Dorsolateral prefrontal cortex (tissue), 120 donors: ENCODE measurements at regions of chr10 and their contacts with region 1.

Region 1: GRCh38 chr10:79274279-79275104 is 72.8 kb upstream of the PPIF start:
- DNase-seq: peak; percentile 71 to 97 (median 95)
- H3K4me3 ChIP-seq: peak overlapping the region in 31 of 59 donors; percentile 3 to 44 (median 24)
- H3K27ac ChIP-seq: peak overlapping the region; percentile 78 to 98 (median 92)
- H3K27me3 ChIP-seq: no peaks in the 10 kb centered on the region
- CTCF ChIP-seq: peak in 43 of 56 donors; percentile 9 to 61 (median 36)

Region 2: DNA sequence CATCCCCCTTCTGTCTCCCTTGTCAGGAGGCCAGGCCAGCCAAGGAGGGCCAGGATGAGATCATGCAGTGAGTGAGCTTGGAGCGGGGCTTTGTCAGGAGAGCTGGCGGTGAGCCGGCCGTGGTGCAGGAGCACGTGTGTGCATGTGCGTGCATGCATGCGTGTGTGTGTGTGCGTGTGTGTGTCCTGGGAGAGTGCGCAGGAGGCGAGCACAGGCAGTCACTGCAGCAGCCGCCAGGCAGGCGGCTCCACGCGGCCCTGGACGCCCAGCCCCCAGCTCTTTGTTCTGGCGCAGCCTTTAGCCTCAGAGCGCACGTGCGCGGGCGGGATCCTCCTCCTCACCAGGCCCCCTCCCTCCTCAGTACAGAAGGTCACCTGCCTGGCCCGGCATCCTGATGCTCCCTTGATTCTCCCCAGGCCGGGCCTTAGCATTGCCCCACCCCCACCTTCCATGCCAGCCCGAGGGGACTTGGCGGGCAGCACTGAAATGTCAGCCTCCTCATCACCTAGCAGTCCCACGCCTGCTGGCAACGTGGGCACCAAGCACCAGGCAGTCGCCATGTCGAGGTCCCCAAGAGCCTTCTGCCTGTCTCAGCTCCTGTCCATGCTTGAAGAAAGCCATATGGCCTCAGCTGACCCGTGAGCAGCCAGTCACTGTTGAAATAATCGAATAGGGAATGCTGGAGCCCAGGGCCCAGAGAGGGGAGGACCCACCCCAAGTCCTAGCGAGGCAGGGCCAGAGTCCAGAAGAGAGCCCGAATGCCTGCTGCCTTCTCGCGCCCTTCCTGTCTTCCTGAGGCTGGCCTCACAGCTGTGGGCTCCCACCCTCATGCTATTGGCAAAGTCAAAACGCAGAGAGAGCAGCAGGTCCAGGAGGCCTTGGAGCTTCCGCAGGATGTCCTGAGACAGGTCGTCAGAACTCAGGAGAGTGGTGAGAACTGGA is 53.1 kb before region 1 on chr10:
- intact Hi-C with region 1: loop called (anchors 5 to 10 kb)
- DNase-seq: peak; percentile 57 to 84 (median 76)
- H3K4me3 ChIP-seq: peak overlapping the region in 24 of 59 donors; percentile 3 to 44 (median 22)
- H3K27ac ChIP-seq: peak overlapping the region; percentile 1 to 91 (median 83)
- H3K27me3 ChIP-seq: no peaks in the 10 kb centered on the region
- CTCF ChIP-seq: peak in 32 of 56 donors; percentile 7 to 51 (median 32)

Region 3: GRCh38 chr10:79242620-79243152 is 31.8 kb before region 1 on chr10:
- intact Hi-C with region 1: loop called in 1 of 2 experiments (anchors 2 kb)
- DNase-seq: peak in 7 of 10 donors; percentile 42 to 86 (median 71)
- H3K4me3 ChIP-seq: peak overlapping the region; percentile 48 to 80 (median 64)
- H3K27ac ChIP-seq: peak overlapping the region in 57 of 59 donors; percentile 48 to 97 (median 90)
- H3K27me3 ChIP-seq: no peaks in the 10 kb centered on the region
- CTCF ChIP-seq: peak in 1 of 56 donors; percentile 32

Region 4: DNA sequence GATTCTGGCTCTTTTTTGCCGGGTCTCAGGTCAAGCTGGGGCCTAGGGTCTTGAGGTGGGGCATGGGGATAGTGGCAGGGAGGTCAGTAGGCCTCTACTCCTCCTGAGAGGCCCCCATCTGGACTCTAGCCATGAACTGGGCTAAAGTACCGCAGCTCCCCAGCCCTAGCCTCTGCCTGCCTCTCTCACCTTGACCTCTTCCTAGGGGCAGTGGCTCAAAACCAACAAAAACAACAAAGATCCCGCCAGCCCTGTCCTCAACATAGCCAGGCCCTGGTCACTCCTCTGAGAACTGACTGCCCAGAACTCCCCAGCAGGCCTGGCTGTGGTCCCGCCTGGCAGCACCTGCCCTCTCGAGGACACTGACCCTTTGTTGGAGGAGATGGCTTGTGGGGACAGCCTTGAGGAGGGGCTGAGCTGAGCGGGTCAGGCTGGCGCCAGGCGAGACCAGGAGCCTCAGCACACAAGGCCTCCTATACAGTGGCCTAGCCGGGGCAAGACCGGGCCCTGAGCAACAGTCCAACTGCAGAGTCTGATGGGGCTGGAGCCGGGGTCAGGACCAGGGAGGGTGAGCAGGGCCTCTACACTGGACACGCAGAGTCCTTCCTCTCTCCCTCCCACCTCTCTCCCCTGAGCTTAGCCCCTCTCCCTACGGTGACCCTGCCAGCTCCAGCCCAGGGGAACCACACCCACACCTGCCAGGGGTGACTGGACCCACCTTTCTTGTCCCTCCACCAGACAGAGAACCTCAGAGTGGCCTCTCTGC is 61.2 kb after region 1 on chr10:
- intact Hi-C with region 1: loop called (anchors 1 kb)
- DNase-seq: peak; percentile 65 to 98 (median 95)
- H3K4me3 ChIP-seq: no peak overlapping the region
- H3K27ac ChIP-seq: peak overlapping the region; percentile 72 to 100 (median 98)
- H3K27me3 ChIP-seq: no peaks in the 10 kb centered on the region
- CTCF ChIP-seq: peak in 9 of 56 donors; percentile 8 to 32 (median 19)

Region 5: GRCh38 chr10:79502561-79503309 is 228.2 kb after region 1 on chr10:
- intact Hi-C with region 1: no loop called
- DNase-seq: no peak
- H3K4me3 ChIP-seq: no peak overlapping the region
- H3K27ac ChIP-seq: no peak overlapping the region
- H3K27me3 ChIP-seq: peaks cover 0 to 10% (median 0%) of the 10 kb centered on the region in 45 donors
- CTCF ChIP-seq: peak in 16 of 56 donors; percentile 6 to 38 (median 17)

Region 6: DNA sequence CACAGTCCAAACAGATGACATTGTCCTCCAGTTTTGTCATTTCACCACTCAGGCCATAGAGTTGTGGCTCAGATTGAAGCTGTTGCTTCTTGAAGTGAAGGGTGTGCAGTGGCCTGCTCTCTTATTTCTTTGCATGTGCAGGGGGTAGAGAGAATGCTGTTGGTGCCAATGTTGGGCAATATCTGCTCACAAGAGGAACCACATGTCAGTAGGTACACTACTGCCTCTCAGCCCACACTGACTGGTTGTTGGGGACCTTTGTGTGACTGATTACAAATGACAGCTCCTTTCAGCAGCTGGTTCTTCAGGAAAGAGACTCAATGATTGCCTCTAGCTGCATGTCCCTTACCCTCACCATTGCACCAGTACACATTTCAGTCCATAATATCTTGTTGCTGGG is 314.3 kb after region 1 on chr10:
- intact Hi-C with region 1: no loop called
- DNase-seq: no peak
- H3K4me3 ChIP-seq: no peak overlapping the region
- H3K27ac ChIP-seq: no peak overlapping the region
- H3K27me3 ChIP-seq: peaks cover 0 to 6% (median 0%) of the 10 kb centered on the region in 45 donors
- CTCF ChIP-seq: no peak